ENCODE measurements at regions of chr5 and their contacts with region 1.

Region 1: GRCh38 chr5:61162010-61162831 is at the start of gene SMIM15:
- DNase-seq: peak; percentile 93 to 94
- H3K4me3 ChIP-seq: peak within 1 kb of the TSS; percentile 87
- H3K4me3 Mint-ChIP-seq: peak within 1 kb of the TSS; percentile 90
- H3K27ac Mint-ChIP-seq: peak within 1 kb of the TSS; percentile 97
- H3K4me1 ChIP-seq: peaks cover 13% of the 10 kb centered on the region; the same call in 1 of the 2 replicates
- H3K4me1 Mint-ChIP-seq: peaks cover 8% of the 10 kb centered on the region
- H3K27me3 ChIP-seq: no peaks in the 10 kb centered on the region
- H3K27me3 Mint-ChIP-seq: no peaks in the 10 kb centered on the region
- CTCF ChIP-seq: no peak
- total RNA-seq, gene SMIM15: 57.7 and 59.7 TPM in 2 replicates

Region 2: GRCh38 chr5:60944904-60945812 is 217.1 kb before region 1 on chr5 and contains the starts of genes ERCC8 and NDUFAF2:
- CTCF ChIA-PET with region 1: no interaction called
- POLR2A ChIA-PET with region 1: no interaction called
- intact Hi-C with region 1: loop called (anchors 10 kb)
- DNase-seq: peak; percentile 93 to 94
- H3K4me3 ChIP-seq: peak within 1 kb of the TSS; percentile 42
- H3K4me3 Mint-ChIP-seq: no peak within 1 kb of the TSS
- H3K27ac Mint-ChIP-seq: no peak within 1 kb of the TSS
- H3K4me1 ChIP-seq: peaks cover 6% of the 10 kb centered on the region; the same call in 1 of the 2 replicates
- H3K4me1 Mint-ChIP-seq: no peaks in the 10 kb centered on the region
- H3K27me3 ChIP-seq: no peaks in the 10 kb centered on the region
- H3K27me3 Mint-ChIP-seq: no peaks in the 10 kb centered on the region
- CTCF ChIP-seq: no peak
- total RNA-seq, gene ERCC8: 18.3 and 19.8 TPM in 2 replicates
- total RNA-seq, gene NDUFAF2: 57.9 and 60.8 TPM in 2 replicates

Region 3: DNA sequence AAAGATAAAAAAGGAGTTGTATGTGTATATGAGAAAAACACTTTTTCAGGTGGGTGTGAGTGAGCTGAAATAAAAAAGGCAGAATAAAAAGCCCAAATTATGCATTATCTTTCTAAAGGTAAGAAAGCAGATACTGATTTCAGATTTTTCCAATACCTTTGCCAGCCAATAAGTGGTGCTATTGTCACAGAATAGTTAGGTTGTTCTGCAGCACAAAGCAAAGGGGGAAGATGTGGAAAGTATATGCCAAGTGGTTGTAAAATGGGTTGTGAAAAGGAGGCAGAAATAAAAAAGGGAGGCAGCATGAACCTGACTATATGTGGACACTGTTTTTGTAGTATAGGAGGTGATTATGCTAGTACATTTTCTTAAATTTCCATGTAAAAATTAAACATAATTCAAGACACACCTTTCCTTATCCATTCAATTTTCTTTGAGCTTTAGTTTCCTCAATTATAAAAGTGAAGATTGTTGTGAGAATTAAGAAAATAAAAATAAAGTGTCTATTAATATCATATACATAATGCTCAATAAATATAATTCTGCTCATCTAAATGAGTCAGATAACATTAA is 106.7 kb before region 1 on chr5:
- CTCF ChIA-PET with region 1: no interaction called
- POLR2A ChIA-PET with region 1: no interaction called
- intact Hi-C with region 1: loop called (anchors 10 kb)
- DNase-seq: peak in 1 of 2 experiments; percentile 43
- H3K4me3 ChIP-seq: no peak overlapping the region
- H3K4me3 Mint-ChIP-seq: no peak overlapping the region
- H3K27ac Mint-ChIP-seq: no peak overlapping the region
- H3K4me1 ChIP-seq: peaks cover 26% of the 10 kb centered on the region
- H3K4me1 Mint-ChIP-seq: peaks cover 19% of the 10 kb centered on the region
- H3K27me3 ChIP-seq: no peaks in the 10 kb centered on the region
- H3K27me3 Mint-ChIP-seq: no peaks in the 10 kb centered on the region
- CTCF ChIP-seq: peak; percentile 73 to 78

Region 4: GRCh38 chr5:61301341-61302199 is 139.3 kb after region 1 on chr5:
- CTCF ChIA-PET with region 1: no interaction called
- POLR2A ChIA-PET with region 1: interaction called, 3 read pairs
- intact Hi-C with region 1: loop called (anchors 10 kb)
- DNase-seq: peak; percentile 89 to 93
- H3K4me3 ChIP-seq: no peak overlapping the region
- H3K4me3 Mint-ChIP-seq: peak overlapping the region; percentile 52
- H3K27ac Mint-ChIP-seq: peak overlapping the region; percentile 86
- H3K4me1 ChIP-seq: peaks cover 52% of the 10 kb centered on the region
- H3K4me1 Mint-ChIP-seq: peaks cover 34% of the 10 kb centered on the region
- H3K27me3 ChIP-seq: no peaks in the 10 kb centered on the region
- H3K27me3 Mint-ChIP-seq: no peaks in the 10 kb centered on the region
- CTCF ChIP-seq: no peak

Region 5: DNA sequence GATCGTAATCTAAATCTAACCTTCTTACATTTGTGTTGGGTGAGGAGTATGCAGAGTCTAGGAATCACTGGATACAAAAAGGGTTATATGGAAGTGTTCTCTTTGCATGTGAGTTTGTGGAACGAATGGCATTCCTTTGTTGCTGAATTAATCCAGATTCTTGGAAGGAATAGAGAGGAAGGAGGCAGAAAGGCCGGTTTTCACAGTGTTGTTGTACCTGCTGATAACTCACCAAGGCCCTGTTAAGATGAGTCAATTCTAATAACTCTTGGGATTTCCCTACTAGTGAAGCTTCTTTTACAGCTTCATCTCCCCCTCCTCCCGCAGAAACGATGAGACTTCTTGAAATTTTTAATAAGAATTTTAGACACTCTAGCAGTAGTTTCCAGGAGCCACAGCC is 253.8 kb after region 1 on chr5:
- CTCF ChIA-PET with region 1: no interaction called
- POLR2A ChIA-PET with region 1: no interaction called
- intact Hi-C with region 1: loop called (anchors 10 kb)
- DNase-seq: peak in 1 of 2 experiments; percentile 8
- H3K4me3 ChIP-seq: no peak overlapping the region
- H3K4me3 Mint-ChIP-seq: peak overlapping the region; percentile 23
- H3K27ac Mint-ChIP-seq: peak overlapping the region; percentile 27
- H3K4me1 ChIP-seq: peaks cover 35% of the 10 kb centered on the region
- H3K4me1 Mint-ChIP-seq: peaks cover 31% of the 10 kb centered on the region
- H3K27me3 ChIP-seq: no peaks in the 10 kb centered on the region
- H3K27me3 Mint-ChIP-seq: no peaks in the 10 kb centered on the region
- CTCF ChIP-seq: no peak

Region 6: DNA sequence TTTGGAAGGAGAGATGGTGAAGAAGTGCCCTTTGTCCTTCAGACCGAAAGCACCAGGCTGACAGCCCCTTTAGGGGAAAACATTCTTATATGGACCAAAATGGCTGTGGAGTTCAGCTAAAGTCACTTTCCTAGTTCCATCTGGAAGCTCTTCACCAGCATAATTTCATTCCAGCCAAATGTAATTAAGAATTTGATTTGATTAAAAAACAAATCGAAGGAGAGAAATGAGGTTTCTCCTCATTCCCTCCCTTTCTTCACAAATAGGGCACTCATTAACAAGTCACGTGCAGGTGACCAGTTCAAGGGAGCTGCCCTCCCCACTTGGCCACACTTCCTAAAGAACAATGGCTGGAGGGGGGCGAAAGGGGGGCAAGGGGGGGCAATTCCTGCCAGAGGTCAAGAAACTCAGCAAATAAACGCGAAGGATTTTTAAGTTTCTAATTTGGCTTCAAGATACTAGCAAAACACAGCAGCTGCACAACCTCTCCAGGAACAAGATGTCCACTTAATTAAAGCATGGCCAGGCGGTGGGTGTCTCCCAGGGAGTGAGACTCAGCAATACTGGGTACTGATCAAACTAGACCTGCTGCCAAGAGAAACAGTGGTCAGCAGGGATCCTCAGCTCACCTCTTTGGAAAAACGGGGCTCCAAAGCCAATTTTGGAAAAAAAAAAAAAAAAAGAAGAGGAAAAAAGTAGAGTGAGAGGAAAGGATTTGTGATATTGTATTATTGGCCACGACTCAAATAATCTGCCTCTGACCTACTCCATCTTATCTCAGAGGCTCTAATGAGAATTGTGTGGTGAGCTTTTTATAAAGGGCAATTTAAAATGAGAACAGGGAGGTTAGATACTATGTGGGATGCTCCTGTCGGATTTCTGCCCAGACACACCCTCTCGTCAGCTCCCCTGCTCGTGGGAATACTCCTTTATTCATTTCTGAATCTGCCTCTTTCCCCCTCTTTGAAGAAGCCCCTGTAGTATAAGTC is 424.2 kb after region 1 on chr5:
- CTCF ChIA-PET with region 1: no interaction called
- POLR2A ChIA-PET with region 1: no interaction called
- intact Hi-C with region 1: no loop called
- DNase-seq: no peak
- H3K4me3 ChIP-seq: no peak overlapping the region
- H3K4me3 Mint-ChIP-seq: no peak overlapping the region
- H3K27ac Mint-ChIP-seq: no peak overlapping the region
- H3K4me1 ChIP-seq: no peaks in the 10 kb centered on the region
- H3K4me1 Mint-ChIP-seq: no peaks in the 10 kb centered on the region
- H3K27me3 ChIP-seq: no peaks in the 10 kb centered on the region
- H3K27me3 Mint-ChIP-seq: peaks cover 6% of the 10 kb centered on the region
- CTCF ChIP-seq: no peak

Region 7: GRCh38 chr5:61658592-61659008 is 496.4 kb after region 1 on chr5:
- CTCF ChIA-PET with region 1: no interaction called
- POLR2A ChIA-PET with region 1: no interaction called
- intact Hi-C with region 1: loop called (anchors 2 kb)
- DNase-seq: peak; percentile 78 to 87
- H3K4me3 ChIP-seq: no peak overlapping the region
- H3K4me3 Mint-ChIP-seq: no peak overlapping the region
- H3K27ac Mint-ChIP-seq: no peak overlapping the region
- H3K4me1 ChIP-seq: no peaks in the 10 kb centered on the region
- H3K4me1 Mint-ChIP-seq: no peaks in the 10 kb centered on the region
- H3K27me3 ChIP-seq: no peaks in the 10 kb centered on the region
- H3K27me3 Mint-ChIP-seq: peaks cover 16% of the 10 kb centered on the region
- CTCF ChIP-seq: peak; percentile 96

Region 8: DNA sequence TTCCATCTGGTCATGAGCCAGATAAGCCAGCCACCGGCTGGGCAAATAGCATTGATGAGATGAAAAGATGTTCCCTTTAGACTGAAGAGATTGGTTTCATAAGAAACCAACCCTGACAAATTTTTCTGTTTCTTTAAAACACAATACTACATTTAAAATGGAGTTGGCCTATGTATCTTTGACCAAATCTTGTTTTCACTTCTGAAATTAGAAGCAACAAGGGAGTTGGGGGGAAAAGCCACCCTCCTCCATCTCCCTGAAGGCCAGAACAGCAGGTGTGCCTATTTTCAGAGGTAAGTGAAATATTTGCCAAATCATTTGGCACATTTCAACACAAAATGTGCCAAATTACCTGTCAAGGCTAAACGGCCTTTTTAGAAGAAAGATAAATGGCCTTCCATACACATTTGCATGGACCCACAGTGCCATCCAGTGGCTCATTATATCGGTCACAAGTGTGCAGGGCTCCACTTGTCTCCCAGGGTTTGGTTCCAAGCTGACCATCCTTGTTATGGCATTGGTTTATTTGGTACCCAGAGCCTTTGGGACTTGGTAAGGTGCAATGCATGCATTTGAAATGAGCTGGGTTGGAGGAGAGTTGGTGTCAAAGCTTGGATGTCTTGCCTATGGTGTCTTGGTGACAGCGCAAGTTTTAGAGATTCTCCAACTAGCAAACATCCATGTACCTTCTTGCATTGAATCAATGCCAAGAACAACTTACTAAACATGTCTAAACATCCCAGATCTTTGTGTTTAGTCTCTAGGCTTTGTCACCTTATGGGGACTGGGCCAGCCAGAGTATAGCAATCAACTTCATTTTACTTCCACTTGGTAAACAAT is 771.8 kb after region 1 on chr5:
- CTCF ChIA-PET with region 1: no interaction called
- POLR2A ChIA-PET with region 1: no interaction called
- intact Hi-C with region 1: loop called (anchors 10 kb)
- DNase-seq: peak; percentile 46 to 55
- H3K4me3 ChIP-seq: no peak overlapping the region
- H3K4me3 Mint-ChIP-seq: no peak overlapping the region
- H3K27ac Mint-ChIP-seq: no peak overlapping the region
- H3K4me1 ChIP-seq: no peaks in the 10 kb centered on the region
- H3K4me1 Mint-ChIP-seq: no peaks in the 10 kb centered on the region
- H3K27me3 ChIP-seq: no peaks in the 10 kb centered on the region
- H3K27me3 Mint-ChIP-seq: peaks cover 5% of the 10 kb centered on the region
- CTCF ChIP-seq: peak; percentile 48 to 55